ENCODE measurements at regions of chr11 and their contacts with region 1.

Region 1: DNA sequence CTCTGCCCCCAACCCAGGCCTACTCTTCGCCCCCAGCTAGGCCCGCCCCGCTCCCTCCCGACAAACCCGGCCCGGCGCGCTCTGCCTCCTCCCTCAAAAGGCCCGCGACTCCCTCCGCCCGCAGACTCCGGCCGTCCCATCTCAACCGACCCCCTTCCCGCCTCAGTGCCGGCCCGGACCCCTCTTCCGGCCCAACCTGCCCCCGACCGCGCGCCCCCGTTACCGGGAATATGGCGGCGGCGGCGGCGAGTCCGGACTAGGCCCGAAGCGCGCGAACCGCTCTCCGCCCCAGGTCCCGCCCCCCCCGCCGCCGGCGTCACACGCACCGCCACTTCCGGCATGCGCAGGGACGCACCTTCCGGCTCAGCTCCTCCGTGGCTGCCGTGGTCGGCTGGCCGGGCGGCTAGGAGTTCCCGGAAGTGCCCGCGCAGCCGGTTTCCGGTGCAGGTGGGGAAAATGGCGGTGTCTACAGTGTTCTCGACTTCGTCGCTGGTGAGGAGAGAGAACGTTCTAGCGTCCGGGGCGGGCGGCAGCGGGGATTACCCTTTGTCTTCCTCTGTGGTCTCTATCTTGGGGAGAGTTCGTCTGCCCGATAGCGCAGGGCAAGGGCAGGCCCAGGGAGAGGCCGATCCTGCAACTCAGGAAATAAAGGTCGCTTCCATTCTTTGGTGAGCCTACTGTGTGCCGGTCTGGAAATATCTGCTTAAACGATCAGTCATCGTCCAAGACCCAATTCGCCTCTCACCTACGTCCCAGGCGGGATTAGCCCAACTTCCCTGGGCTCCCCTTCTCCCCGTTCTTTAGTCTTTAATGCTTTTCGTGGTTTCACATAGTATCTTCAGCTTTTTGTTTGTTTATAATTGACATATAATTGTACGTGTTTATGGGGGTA is at the starts of genes CPSF7 and SDHAF2:
- DNase-seq: peak; percentile 94 to 97
- ATAC-seq: peak; percentile 96 to 97
- H3K4me3 ChIP-seq: peak within 1 kb of the TSS; percentile 82
- H3K27ac ChIP-seq: peak within 1 kb of the TSS; percentile 91 to 98
- H3K4me1 ChIP-seq: peaks cover 27% of the 10 kb centered on the region
- CTCF ChIP-seq: no peak
- EP300 ChIP-seq: no peak
- POLR2A ChIP-seq: peak; percentile 55
- RAD21 ChIP-seq: no peak
- polyA plus RNA-seq, gene CPSF7: 56.7 and 72.9 TPM in 2 replicates
- polyA plus RNA-seq, gene SDHAF2: 76.4 and 106 TPM in 2 replicates

Region 2: GRCh38 chr11:61061081-61061826 is 368.7 kb before region 1 on chr11:
- CTCF ChIA-PET with region 1: no interaction called
- POLR2A ChIA-PET with region 1: no interaction called
- DNase-seq: no peak
- ATAC-seq: no peak; a peak in 1 of 6 replicates
- H3K4me3 ChIP-seq: no peak overlapping the region
- H3K27ac ChIP-seq: no peak overlapping the region
- H3K4me1 ChIP-seq: peaks cover 8% of the 10 kb centered on the region; the same call in 2 of the 3 replicates
- CTCF ChIP-seq: no peak
- EP300 ChIP-seq: no peak
- POLR2A ChIP-seq: no peak
- RAD21 ChIP-seq: no peak

Region 3: GRCh38 chr11:61083601-61084147 is 346.3 kb before region 1 on chr11:
- CTCF ChIA-PET with region 1: no interaction called
- POLR2A ChIA-PET with region 1: no interaction called
- DNase-seq: no peak
- ATAC-seq: no peak
- H3K4me3 ChIP-seq: no peak overlapping the region
- H3K27ac ChIP-seq: no peak overlapping the region
- H3K4me1 ChIP-seq: no peaks in the 10 kb centered on the region
- CTCF ChIP-seq: no peak
- EP300 ChIP-seq: no peak
- POLR2A ChIP-seq: no peak
- RAD21 ChIP-seq: no peak

Region 4: DNA sequence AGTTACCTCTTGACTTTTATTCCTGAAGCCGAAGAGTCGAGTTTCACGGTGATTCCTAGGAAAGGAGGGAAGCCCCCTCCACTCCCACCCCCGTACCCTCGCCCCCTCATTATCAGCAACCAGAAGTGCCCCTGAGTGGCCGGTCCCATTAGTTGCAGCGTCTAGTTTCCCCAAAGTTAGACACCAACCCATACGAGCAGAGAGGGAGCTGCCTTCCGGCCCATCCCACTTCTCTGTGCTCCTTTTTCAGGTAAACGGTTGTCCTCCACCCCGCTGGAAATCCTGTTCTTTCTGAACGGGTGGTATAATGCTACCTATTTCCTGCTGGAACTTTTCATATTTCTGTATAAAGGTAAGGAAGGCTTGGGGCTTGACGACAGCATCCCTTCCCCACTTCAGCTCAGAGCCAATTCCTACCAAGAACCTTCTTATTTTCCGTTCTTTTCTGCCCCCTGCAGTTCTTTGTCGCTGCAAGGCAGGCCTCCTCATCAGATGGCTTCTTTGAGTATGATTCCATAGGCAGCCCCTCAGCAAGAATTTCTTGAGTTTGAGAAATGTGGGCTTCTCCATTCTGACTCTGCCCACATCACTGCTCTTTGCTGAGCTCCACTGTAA is 36.8 kb before region 1 on chr11:
- CTCF ChIA-PET with region 1: interaction called, 4 read pairs
- POLR2A ChIA-PET with region 1: interaction called, 15 read pairs
- DNase-seq: peak; percentile 28 to 35
- ATAC-seq: peak; percentile 51 to 64; a peak in 5 of 6 replicates
- H3K4me3 ChIP-seq: peak overlapping the region; percentile 69
- H3K27ac ChIP-seq: peak overlapping the region; percentile 82 to 90
- H3K4me1 ChIP-seq: 0 out of 3 replicates have a peak, but pooled peaks cover 8% of the 10 kb centered on the region
- CTCF ChIP-seq: peak; percentile 32
- EP300 ChIP-seq: no peak
- POLR2A ChIP-seq: no peak
- RAD21 ChIP-seq: peak; percentile 41 to 49; a peak in 4 of 5 replicates

Region 5: GRCh38 chr11:61417670-61418069 is 12.3 kb before region 1 on chr11:
- CTCF ChIA-PET with region 1: interaction called, 6 read pairs
- POLR2A ChIA-PET with region 1: interaction called, 11 read pairs
- DNase-seq: peak in 1 of 2 experiments; percentile 59
- ATAC-seq: peak; percentile 30 to 43; a peak in 3 of 6 replicates
- H3K4me3 ChIP-seq: no peak overlapping the region
- H3K27ac ChIP-seq: peak overlapping the region in 1 of 2 experiments; percentile 18; a peak in 1 of 6 replicates
- H3K4me1 ChIP-seq: peaks cover 13% of the 10 kb centered on the region; the same call in 2 of the 3 replicates
- CTCF ChIP-seq: no peak
- EP300 ChIP-seq: no peak
- POLR2A ChIP-seq: no peak
- RAD21 ChIP-seq: no peak

Region 6: GRCh38 chr11:61446211-61446651 is 16.3 kb after region 1 on chr11:
- CTCF ChIA-PET with region 1: interaction called, 164 read pairs
- POLR2A ChIA-PET with region 1: interaction called, 21 read pairs
- DNase-seq: peak; percentile 90
- ATAC-seq: peak; percentile 98 to 99
- H3K4me3 ChIP-seq: no peak overlapping the region
- H3K27ac ChIP-seq: peak overlapping the region; percentile 44 to 79; a peak in 5 of 6 replicates
- H3K4me1 ChIP-seq: peaks cover 12% of the 10 kb centered on the region
- CTCF ChIP-seq: peak; percentile 91
- EP300 ChIP-seq: no peak
- POLR2A ChIP-seq: no peak
- RAD21 ChIP-seq: peak; percentile 71 to 77

Region 7: GRCh38 chr11:61460474-61460881 is 30.5 kb after region 1 on chr11:
- CTCF ChIA-PET with region 1: interaction called, 10 read pairs
- POLR2A ChIA-PET with region 1: no interaction called
- DNase-seq: no peak
- ATAC-seq: no peak
- H3K4me3 ChIP-seq: no peak overlapping the region
- H3K27ac ChIP-seq: no peak overlapping the region
- H3K4me1 ChIP-seq: no peaks in the 10 kb centered on the region
- CTCF ChIP-seq: no peak
- EP300 ChIP-seq: no peak
- POLR2A ChIP-seq: no peak
- RAD21 ChIP-seq: no peak